PC-3 (cell line): ENCODE measurements at regions of chr14 and their contacts with region 1.

Region 1: GRCh38 chr14:103562429-103563225 is at the starts of genes BAG5 and COA8:
- DNase-seq: peak; percentile 79
- ATAC-seq: peak; percentile 57
- H3K4me3 ChIP-seq: peak within 1 kb of the TSS; percentile 89
- H3K27ac ChIP-seq: peak within 1 kb of the TSS; percentile 84
- H3K4me1 ChIP-seq: peaks cover 41% of the 10 kb centered on the region
- H3K27me3 ChIP-seq: no peaks in the 10 kb centered on the region
- CTCF ChIP-seq: no peak
- total RNA-seq, gene BAG5: 28.1 and 33.0 TPM in 2 replicates
- total RNA-seq, gene COA8: 52.7 and 62.3 TPM in 2 replicates

Region 2: DNA sequence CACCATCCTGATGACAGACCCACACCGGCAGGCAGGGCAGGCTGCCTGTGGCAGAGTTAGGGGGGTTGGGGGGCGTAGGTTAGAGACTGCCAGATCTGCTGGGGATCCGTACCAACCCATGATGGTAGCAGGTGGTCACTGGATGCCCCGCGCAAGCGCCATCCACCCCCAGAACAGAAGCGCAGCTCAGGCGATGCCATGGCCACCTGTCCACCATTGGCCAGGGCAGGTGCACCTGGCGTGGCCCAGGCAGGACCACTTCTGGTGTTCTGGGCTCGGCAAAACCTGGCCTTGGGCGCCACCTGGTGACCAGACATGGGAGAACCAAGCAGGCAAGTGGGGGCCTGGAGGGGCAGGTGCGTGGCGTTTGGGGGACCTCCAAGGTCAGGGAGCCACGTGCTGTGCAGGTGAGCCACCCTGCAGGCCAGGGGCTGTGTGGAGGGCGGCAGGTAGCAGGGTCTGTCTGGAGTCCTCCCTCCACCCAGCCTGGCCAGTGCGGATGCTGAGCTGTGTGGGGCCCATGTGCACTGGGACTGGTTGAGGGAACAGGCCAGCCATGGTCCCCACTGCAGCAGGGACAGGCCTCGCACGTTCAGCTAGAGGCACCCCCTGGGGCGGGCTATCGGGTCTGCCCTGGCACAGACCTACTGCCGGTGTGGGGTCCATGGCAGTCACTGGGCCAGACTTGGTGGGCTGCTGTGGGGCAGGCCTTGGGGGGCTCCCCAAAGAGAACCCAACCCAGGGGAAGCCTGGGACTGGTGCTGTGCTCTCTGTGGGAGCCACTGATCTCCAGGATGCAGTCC is 15.8 kb before region 1 on chr14:
- CTCF ChIA-PET with region 1: interaction called, 3 read pairs
- POLR2A ChIA-PET with region 1: interaction called, 44 read pairs
- intact Hi-C with region 1: no loop called
- DNase-seq: peak; percentile 76
- ATAC-seq: peak; percentile 75
- H3K4me3 ChIP-seq: no peak overlapping the region
- H3K27ac ChIP-seq: no peak overlapping the region
- H3K4me1 ChIP-seq: peaks cover 19% of the 10 kb centered on the region
- H3K27me3 ChIP-seq: no peaks in the 10 kb centered on the region
- CTCF ChIP-seq: peak; percentile 96

Region 3: DNA sequence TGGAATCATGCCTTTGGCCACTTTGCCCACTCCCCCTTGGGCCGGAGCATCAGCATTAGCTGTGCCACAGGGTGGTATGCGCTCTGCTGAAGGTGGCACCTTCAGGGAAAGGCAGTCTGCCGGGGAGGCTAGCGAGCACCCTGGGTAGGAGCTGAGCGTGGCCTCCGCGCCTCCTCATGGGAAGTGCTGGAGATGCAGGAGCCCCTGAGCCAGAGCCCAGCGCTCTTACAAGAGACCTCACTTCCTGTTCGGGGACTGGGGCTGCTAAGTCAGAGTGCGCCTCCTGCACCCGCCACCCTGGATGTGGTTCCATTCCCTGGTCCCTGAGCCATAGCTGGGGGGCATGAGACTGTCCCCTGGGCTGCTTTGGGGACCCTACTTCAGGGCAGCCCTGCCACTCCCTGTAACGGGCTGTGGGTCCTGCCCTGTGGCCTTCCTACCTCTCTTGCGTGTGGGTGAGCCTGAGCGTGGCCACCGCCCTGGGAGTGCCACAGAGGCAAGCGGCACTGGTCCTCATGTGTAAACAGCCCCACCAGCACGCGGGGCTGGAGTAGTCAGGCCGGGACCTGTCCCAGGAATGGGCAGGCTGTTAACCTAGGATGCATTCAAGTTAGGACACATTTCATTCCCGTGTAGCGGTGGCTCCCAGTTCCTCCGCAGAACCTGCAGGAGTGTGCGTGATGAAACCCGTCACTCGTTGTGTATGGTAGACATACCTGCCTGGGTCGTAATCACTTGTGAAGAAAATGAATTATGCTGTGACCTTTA is 19.5 kb after region 1 on chr14:
- CTCF ChIA-PET with region 1: interaction called, 11 read pairs
- POLR2A ChIA-PET with region 1: no interaction called
- intact Hi-C with region 1: no loop called
- DNase-seq: no peak
- ATAC-seq: no peak
- H3K4me3 ChIP-seq: no peak overlapping the region
- H3K27ac ChIP-seq: no peak overlapping the region
- H3K4me1 ChIP-seq: peaks cover 4% of the 10 kb centered on the region
- H3K27me3 ChIP-seq: no peaks in the 10 kb centered on the region
- CTCF ChIP-seq: no peak

Region 4: DNA sequence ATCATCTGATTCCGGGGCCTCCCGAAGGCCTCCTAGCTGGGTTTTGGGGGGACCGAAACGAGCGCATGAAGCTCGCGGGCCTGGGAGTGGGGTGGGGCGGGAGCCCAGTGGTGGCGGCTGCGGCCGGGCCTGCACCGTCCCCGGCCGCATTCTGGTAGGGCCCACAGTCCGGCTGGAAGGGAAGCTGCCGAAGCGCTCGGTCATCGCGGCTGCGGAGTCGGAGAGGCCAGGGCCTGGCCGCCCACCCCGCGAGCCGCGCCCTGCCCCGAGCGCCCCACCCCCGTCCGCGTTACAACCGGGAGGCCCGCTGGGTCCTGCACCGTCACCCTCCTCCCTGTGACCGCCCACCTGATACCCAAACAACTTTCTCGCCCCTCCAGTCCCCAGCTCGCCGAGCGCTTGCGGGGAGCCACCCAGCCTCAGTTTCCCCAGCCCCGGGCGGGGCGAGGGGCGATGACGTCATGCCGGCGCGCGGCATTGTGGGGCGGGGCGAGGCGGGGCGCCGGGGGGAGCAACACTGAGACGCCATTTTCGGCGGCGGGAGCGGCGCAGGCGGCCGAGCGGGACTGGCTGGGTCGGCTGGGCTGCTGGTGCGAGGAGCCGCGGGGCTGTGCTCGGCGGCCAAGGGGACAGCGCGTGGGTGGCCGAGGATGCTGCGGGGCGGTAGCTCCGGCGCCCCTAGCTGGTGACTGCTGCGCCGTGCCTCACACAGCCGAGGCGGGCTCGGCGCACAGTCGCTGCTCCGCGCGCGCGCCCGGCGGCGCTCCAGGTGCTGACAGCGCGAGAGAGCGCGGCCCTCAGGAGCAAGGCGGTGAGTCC is 66.3 kb after region 1 on chr14 and contains the start of gene KLC1:
- CTCF ChIA-PET with region 1: no interaction called
- POLR2A ChIA-PET with region 1: interaction called, 12 read pairs
- intact Hi-C with region 1: no loop called
- DNase-seq: peak; percentile 58
- ATAC-seq: peak; percentile 20
- H3K4me3 ChIP-seq: peak within 1 kb of the TSS; percentile 97
- H3K27ac ChIP-seq: peak within 1 kb of the TSS; percentile 93
- H3K4me1 ChIP-seq: peaks cover 59% of the 10 kb centered on the region
- H3K27me3 ChIP-seq: no peaks in the 10 kb centered on the region
- CTCF ChIP-seq: no peak
- total RNA-seq, gene KLC1: 306 and 466 TPM in 2 replicates